B cell (primary cell): ENCODE measurements at regions of chr16 and their contacts with region 1.

Region 1: GRCh38 chr16:20695024-20695423 is 2.5 kb downstream of the ACSM1 start:
- DNase-seq: no peak
- ATAC-seq: no peak
- H3K4me3 ChIP-seq: no peak overlapping the region
- H3K4me3 Mint-ChIP-seq: no peak overlapping the region
- H3K27ac ChIP-seq: no peak overlapping the region
- H3K27ac Mint-ChIP-seq: no peak overlapping the region
- H3K4me1 ChIP-seq: peaks cover 0 to 10% of the 10 kb centered on the region in 2 donors
- H3K4me1 Mint-ChIP-seq: peaks cover 13% of the 10 kb centered on the region
- H3K27me3 ChIP-seq: no peaks in the 10 kb centered on the region
- H3K27me3 Mint-ChIP-seq: no peaks in the 10 kb centered on the region
- CTCF ChIP-seq: no peak

Region 2: DNA sequence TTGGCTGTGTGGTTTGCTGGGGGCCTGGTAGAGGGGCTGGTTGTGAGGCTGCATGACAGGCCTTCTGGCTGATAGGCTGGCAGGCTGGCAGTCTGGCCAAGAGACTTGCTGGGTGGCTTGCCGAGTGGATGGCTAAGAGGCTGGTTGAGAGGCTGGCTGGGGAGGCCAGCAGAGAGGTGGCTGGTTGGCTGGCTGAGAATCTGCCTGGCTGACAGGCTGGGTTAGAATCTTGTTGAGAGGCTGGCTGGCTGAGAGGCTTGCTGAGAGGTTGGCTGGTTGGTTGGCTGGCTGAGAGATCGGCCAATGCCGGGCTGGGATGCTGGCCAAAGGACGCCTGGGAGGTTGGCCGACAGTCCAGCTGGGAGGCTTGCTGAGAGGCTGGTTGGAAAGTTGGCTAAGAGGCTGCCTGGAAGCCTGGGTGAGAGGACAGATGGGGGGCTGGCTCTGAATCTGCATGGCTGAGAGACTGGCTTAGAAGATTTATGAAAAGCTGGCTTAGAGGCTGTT is 83.0 kb before region 1 on chr16:
- CTCF ChIA-PET with region 1: no interaction called
- POLR2A ChIA-PET with region 1: no interaction called
- intact Hi-C with region 1: loop called (anchors 10 kb)
- DNase-seq: no peak
- ATAC-seq: no peak
- H3K4me3 ChIP-seq: no peak overlapping the region
- H3K4me3 Mint-ChIP-seq: no peak overlapping the region
- H3K27ac ChIP-seq: no peak overlapping the region
- H3K27ac Mint-ChIP-seq: no peak overlapping the region
- H3K4me1 ChIP-seq: no peaks in the 10 kb centered on the region
- H3K4me1 Mint-ChIP-seq: no peaks in the 10 kb centered on the region
- H3K27me3 ChIP-seq: peaks cover 0 to 6% (median 2%) of the 10 kb centered on the region in 4 experiments
- H3K27me3 Mint-ChIP-seq: peaks cover 48% of the 10 kb centered on the region
- CTCF ChIP-seq: no peak

Region 3: GRCh38 chr16:20669679-20670078 is 25.3 kb before region 1 on chr16:
- CTCF ChIA-PET with region 1: no interaction called
- POLR2A ChIA-PET with region 1: no interaction called
- intact Hi-C with region 1: no loop called
- DNase-seq: no peak
- ATAC-seq: no peak
- H3K4me3 ChIP-seq: no peak overlapping the region
- H3K4me3 Mint-ChIP-seq: no peak overlapping the region
- H3K27ac ChIP-seq: no peak overlapping the region
- H3K27ac Mint-ChIP-seq: no peak overlapping the region
- H3K4me1 ChIP-seq: peaks cover 17 to 18% of the 10 kb centered on the region in 2 donors
- H3K4me1 Mint-ChIP-seq: peaks cover 16% of the 10 kb centered on the region
- H3K27me3 ChIP-seq: no peaks in the 10 kb centered on the region
- H3K27me3 Mint-ChIP-seq: no peaks in the 10 kb centered on the region
- CTCF ChIP-seq: no peak

Region 4: DNA sequence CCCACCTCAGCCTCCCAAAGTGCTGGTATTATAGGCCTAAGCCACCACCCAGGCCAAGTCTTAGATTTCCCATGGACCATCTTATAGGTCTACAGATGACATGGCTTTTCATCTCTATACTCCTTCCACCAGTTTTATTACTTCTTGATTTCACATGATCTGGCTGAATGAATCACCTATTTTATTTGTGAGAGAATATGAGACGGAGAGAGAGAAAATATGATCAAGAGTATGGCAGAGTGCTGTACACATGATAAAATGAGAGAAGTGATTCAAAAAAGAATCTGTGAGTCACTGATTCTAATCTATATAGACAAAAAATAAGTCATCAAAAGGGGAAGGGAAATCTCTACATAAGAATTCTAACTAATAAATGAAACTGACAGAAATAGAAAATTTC is 11.2 kb before region 1 on chr16:
- CTCF ChIA-PET with region 1: no interaction called
- POLR2A ChIA-PET with region 1: no interaction called
- intact Hi-C with region 1: no loop called
- DNase-seq: no peak
- ATAC-seq: no peak
- H3K4me3 ChIP-seq: no peak overlapping the region
- H3K4me3 Mint-ChIP-seq: no peak overlapping the region
- H3K27ac ChIP-seq: no peak overlapping the region
- H3K27ac Mint-ChIP-seq: no peak overlapping the region
- H3K4me1 ChIP-seq: no peaks in the 10 kb centered on the region
- H3K4me1 Mint-ChIP-seq: peaks cover 4% of the 10 kb centered on the region
- H3K27me3 ChIP-seq: no peaks in the 10 kb centered on the region
- H3K27me3 Mint-ChIP-seq: peaks cover 3% of the 10 kb centered on the region
- CTCF ChIP-seq: no peak